ENCODE measurements at regions of chr4 and their contacts with region 1.

Region 1: GRCh38 chr4:98143001-98143899 is at the start of gene STPG2:
- DNase-seq: peak; percentile 94
- H3K4me3 ChIP-seq: peak within 1 kb of the TSS; percentile 53 to 70 (median 59)
- H3K27ac ChIP-seq: peak within 1 kb of the TSS; percentile 67 to 78 (median 76)
- H3K4me1 ChIP-seq: peaks cover 0 to 9% (median 5%) of the 10 kb centered on the region in 4 donors
- H3K27me3 ChIP-seq: no peaks in the 10 kb centered on the region
- CTCF ChIP-seq: no peak
- EP300 ChIP-seq: no peak
- POLR2A ChIP-seq: peak; percentile 48 to 51
- total RNA-seq, gene STPG2: 0.33 to 0.71 TPM in 2 of 4 donors, not detected in the others

Region 2: GRCh38 chr4:98113012-98113411 is 30.2 kb before region 1 on chr4:
- intact Hi-C with region 1: no loop called
- DNase-seq: no peak
- H3K4me3 ChIP-seq: no peak overlapping the region
- H3K27ac ChIP-seq: no peak overlapping the region
- H3K4me1 ChIP-seq: peaks cover 0 to under 1% (median 0%) of the 10 kb centered on the region in 4 donors
- H3K27me3 ChIP-seq: no peaks in the 10 kb centered on the region
- CTCF ChIP-seq: peak in 1 of 4 experiments; percentile 19
- EP300 ChIP-seq: no peak
- POLR2A ChIP-seq: no peak

Region 3: DNA sequence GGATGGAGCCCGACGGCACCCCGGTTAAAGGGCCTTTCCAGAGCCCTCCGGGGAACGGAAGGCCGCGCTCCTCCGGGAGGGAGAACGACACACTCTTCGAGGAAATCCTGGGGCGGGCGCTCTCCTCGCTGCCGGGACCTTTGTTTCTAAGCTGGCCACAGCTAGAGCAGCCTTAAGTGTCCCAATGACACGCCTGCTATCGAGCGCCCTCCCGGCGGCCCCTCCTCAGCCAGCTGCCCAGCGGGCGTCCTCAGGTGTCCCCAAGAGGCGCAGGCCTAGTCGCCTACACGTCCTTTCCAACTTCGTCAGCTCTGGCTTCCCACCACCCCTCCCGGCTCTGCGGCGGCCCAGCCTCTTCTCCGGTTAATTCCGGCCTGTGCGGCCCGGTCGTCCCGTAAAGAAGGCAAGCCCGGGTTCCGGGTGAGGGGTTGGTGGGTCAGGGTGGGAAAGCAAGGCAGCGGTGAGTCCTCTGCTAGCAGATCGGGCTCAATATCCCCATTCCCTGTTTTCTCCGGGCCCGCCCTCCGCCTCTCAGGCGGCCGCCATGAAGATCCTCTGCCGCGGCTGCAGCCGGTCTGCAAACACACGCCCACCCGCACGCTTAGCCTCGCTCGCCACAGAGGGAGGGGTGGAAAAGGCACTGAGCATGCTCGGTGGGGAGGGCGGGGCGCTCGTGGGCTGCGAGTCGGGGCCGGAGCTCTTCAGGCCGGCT is 117.5 kb after region 1 on chr4:
- intact Hi-C with region 1: loop called (anchors 2 kb)
- DNase-seq: peak; percentile 97
- H3K4me3 ChIP-seq: peak overlapping the region; percentile 68 to 97 (median 85)
- H3K27ac ChIP-seq: peak overlapping the region; percentile 97 to 98 (median 98)
- H3K4me1 ChIP-seq: peaks cover 0 to 36% (median 25%) of the 10 kb centered on the region in 4 donors
- H3K27me3 ChIP-seq: no peaks in the 10 kb centered on the region
- CTCF ChIP-seq: no peak
- EP300 ChIP-seq: no peak
- POLR2A ChIP-seq: peak; percentile 92 to 93

Region 4: DNA sequence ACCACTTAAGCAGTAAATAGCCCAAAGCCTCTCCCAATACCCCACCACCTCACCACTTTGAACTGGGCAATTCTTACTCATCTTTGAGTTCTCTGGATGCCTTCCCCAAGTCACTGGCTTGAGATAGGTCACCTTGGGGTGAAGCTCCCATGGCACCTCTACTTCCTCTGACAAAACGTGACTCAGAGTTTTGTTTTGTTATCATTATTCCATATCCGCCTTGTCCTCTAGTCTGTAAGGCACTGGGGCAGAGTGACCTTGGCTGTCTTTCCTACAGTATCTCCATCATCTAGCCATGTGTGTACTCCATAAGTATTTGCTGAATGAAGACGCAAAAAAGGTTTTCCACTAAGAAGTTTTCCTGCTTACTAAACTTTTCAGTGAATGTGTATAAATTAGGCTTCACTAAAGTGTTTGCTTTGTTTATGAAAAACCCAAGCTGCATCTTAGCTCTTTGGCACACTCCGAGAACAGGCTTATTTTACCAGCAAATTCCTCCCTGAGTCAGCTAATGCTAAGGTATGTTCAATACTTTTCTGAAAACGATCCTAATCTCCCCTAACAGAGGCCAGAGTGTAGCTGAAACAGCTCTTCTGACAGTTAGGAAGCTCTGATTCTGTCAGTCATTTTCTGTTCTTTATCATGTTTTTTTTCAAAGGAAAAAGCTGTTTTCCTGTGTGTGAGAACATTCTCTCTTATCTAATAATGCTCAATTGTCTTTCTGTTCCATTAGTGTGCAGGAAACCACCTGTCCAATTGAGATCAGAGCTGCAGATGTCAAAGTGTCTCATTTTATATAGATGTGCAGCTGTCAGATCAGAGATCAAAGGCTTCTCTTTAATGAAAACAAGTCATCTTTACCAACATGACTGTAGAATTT is 545.4 kb after region 1 on chr4:
- intact Hi-C with region 1: no loop called
- DNase-seq: no peak
- H3K4me3 ChIP-seq: no peak overlapping the region
- H3K27ac ChIP-seq: no peak overlapping the region
- H3K4me1 ChIP-seq: peaks cover 0 to 5% (median 0%) of the 10 kb centered on the region in 4 donors
- H3K27me3 ChIP-seq: no peaks in the 10 kb centered on the region
- CTCF ChIP-seq: no peak
- EP300 ChIP-seq: no peak
- POLR2A ChIP-seq: no peak